MCF 10A (cell line): ENCODE measurements at regions of chr1 and their contacts with region 1.

Region 1: DNA sequence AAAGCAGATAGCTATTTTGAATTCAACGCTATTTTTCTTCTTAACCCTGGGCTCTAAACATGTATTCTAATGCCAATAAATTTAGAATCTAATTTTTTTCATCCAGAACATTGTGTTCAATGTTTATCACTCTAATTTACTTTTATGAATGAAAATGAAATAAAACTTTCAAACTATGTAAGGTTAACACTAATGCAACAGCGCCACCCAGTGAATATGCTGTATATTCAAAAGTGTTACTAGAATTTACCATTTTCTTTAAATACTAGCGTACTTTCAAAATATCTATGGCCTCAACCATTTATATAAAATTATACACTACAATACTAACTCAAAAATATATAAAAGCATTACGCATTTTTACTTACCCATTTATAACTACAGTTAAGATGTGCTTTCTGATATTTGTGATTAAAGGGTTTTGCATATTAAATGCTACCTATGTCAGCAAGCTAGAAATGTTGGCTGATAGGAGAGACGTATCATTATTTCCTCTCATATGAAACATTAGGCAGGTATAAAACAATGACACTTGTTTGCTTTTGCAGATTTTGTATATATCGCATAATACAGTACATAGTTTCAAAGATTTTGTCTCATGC is 5.9 kb upstream of the NUF2 start:
- DNase-seq: peak; percentile 68
- H3K4me3 Mint-ChIP-seq: no peak overlapping the region
- H3K27ac Mint-ChIP-seq: no peak overlapping the region
- H3K4me1 Mint-ChIP-seq: peaks cover 4% of the 10 kb centered on the region
- H3K27me3 Mint-ChIP-seq: no peaks in the 10 kb centered on the region
- CTCF ChIP-seq: peak; percentile 61

Region 2: DNA sequence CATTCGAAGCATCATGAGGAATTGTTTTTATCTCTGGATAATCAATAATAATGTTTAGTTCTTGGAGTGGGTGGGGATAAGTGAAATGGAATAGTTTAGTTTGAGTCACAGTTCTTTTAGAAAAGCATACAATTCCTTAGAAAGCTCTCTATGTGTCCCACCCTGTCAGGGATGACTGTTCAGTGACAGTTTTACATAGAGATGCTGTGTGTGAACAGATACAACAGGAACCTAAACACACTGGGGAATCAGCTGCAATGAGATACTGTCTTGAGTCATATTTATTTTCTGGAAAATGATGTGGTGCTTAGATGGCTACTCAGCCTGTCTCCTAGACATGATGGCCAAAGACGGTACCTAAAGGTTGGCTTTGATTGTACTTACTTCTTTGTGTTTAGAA is 429.2 kb before region 1 on chr1:
- CTCF ChIA-PET with region 1: interaction called, 11 read pairs
- POLR2A ChIA-PET with region 1: no interaction called
- intact Hi-C with region 1: no loop called
- DNase-seq: no peak
- H3K4me3 Mint-ChIP-seq: no peak overlapping the region
- H3K27ac Mint-ChIP-seq: no peak overlapping the region
- H3K4me1 Mint-ChIP-seq: no peaks in the 10 kb centered on the region
- H3K27me3 Mint-ChIP-seq: no peaks in the 10 kb centered on the region
- CTCF ChIP-seq: no peak

Region 3: DNA sequence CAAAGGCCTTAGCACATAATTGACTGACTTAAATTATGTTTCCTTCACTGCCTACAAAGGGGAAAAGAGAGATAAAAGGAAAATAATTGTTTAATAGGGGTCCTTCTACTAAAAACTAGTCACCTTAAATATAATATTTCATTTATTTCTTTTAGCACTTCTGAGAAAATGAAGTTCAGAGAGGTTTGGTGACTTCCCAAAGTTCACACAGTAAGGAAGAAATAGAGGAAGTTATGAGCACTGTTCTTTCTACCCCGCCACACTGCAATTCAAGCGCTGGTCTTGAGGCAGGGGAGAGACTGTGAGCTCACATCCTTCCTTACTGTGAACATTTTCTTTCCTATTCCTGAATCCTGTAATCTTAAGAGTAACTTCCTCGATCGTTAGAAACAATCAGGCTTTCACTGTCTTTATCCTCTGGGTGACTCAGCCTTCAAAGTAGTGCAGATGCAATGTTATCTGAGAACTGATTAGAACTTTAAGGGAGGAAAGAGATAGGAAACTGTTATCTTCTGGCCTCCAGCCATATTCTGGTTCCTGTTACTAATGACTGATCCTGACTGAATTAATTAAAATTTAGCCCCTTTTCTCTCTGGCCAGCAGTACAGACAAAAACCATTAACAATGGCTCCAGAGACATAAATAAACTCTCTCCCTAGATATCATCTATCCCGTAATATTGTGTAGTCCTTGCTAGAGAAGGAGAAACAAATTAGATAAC is 120.0 kb before region 1 on chr1:
- CTCF ChIA-PET with region 1: interaction called, 12 read pairs
- POLR2A ChIA-PET with region 1: no interaction called
- intact Hi-C with region 1: no loop called
- DNase-seq: no peak
- H3K4me3 Mint-ChIP-seq: no peak overlapping the region
- H3K27ac Mint-ChIP-seq: no peak overlapping the region
- H3K4me1 Mint-ChIP-seq: no peaks in the 10 kb centered on the region
- H3K27me3 Mint-ChIP-seq: no peaks in the 10 kb centered on the region
- CTCF ChIP-seq: no peak

Region 4: GRCh38 chr1:163290025-163290640 is 25.7 kb before region 1 on chr1:
- CTCF ChIA-PET with region 1: interaction called, 10 read pairs
- POLR2A ChIA-PET with region 1: no interaction called
- intact Hi-C with region 1: no loop called
- DNase-seq: peak; percentile 91
- H3K4me3 Mint-ChIP-seq: no peak overlapping the region
- H3K27ac Mint-ChIP-seq: peak overlapping the region; percentile 8
- H3K4me1 Mint-ChIP-seq: peaks cover 6% of the 10 kb centered on the region
- H3K27me3 Mint-ChIP-seq: no peaks in the 10 kb centered on the region
- CTCF ChIP-seq: no peak

Region 5: DNA sequence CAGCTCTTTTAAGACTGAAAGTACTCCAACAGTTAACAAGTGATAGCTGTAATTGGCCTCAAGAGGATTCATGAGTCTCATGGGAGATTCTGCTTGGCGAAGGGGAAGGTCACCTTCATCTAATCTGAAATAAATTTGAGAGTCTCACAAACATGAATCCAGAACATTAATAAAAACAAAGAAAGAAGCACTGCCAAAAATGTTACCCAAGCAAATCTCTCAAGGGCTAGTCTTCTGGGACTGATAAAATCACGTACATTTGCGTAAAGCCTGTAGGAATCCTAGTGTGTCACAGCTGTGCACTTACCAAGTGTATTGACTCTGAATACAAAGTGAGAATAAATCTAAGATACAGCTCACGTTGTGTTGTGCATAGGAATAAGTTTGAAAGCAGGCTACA is 15.3 kb before region 1 on chr1:
- CTCF ChIA-PET with region 1: interaction called, 46 read pairs
- POLR2A ChIA-PET with region 1: interaction called, 5 read pairs
- intact Hi-C with region 1: no loop called
- DNase-seq: no peak
- H3K4me3 Mint-ChIP-seq: no peak overlapping the region
- H3K27ac Mint-ChIP-seq: no peak overlapping the region
- H3K4me1 Mint-ChIP-seq: no peaks in the 10 kb centered on the region
- H3K27me3 Mint-ChIP-seq: no peaks in the 10 kb centered on the region
- CTCF ChIP-seq: no peak

Region 6: DNA sequence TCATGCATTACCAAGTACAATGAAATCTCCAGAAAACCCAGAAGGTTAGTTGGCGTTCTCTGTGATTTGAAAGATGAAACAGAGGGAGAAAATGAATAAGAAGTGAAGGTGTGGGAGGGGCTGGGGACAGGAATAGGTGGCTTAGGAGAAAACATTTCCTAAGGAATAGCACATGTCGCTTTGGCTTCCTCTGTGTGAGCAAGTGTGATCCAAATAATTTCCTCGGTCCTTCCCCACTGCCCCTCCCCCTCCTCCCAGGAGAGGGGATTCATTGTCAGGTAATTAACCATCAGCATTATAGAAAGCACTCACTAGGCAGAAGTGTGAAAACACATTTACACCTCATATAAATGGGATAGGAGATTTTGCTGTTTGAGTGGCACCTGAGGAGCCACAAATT is 111.4 kb after region 1 on chr1:
- CTCF ChIA-PET with region 1: no interaction called
- POLR2A ChIA-PET with region 1: no interaction called
- intact Hi-C with region 1: no loop called
- DNase-seq: no peak
- H3K4me3 Mint-ChIP-seq: no peak overlapping the region
- H3K27ac Mint-ChIP-seq: no peak overlapping the region
- H3K4me1 Mint-ChIP-seq: no peaks in the 10 kb centered on the region
- H3K27me3 Mint-ChIP-seq: peaks cover 11% of the 10 kb centered on the region
- CTCF ChIP-seq: no peak